ENCODE measurements at regions of chr11 and their contacts with region 1.

Region 1: GRCh38 chr11:117232092-117232878 is at the start of gene RNF214:
- DNase-seq: peak; percentile 74 to 90 (median 86)
- ATAC-seq: peak; percentile 89 to 92 (median 92)
- H3K4me3 ChIP-seq: peak within 1 kb of the TSS; percentile 81 to 94 (median 90)
- H3K27ac ChIP-seq: peak within 1 kb of the TSS; percentile 69 to 92 (median 86)
- H3K4me1 ChIP-seq: peaks cover 9 to 21% (median 13%) of the 10 kb centered on the region in 3 donors
- H3K27me3 ChIP-seq: no peaks in the 10 kb centered on the region
- CTCF ChIP-seq: peak; percentile 87 to 96 (median 89)
- total RNA-seq, gene RNF214: 14.0 to 23.8 (median 20.8) TPM

Region 2: DNA sequence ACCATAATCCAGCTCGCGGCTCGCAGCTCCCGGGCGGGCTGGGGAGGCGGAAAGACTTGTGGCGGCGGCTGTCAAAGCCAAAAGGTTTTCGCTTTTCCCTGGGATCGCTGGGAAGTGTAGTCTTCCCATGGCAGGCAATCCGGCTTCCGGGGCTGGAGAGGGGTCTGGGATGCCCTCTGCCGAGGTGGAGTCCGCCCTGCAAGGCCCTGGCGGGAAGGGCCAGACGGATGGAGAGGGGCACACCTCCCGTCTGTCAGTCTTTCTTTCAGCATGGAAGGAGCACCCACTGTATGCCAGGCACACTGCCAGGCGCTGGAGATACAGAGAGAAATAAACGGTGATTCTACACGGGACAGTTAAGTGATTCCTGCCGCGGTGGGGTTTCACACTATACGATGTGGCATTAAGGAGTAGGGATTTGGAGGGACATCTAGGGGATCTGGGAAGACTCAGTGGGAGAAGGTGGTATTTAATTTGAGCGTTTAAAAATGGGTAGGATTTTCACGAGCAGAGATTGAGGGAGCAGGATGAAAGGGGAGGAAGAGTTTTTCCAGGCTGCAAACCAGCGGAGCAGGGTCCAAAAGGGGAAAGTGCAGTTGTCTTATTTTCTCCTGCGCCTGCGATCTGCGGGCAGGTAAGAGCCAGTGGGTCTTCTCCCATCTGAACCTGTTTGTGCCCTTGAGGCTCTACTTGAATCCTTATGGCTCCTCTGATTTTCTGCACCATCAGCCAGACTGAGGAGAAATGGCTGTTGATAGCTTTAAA is 84.1 kb after region 1 on chr11 and contains the start of gene BACE1:
- intact Hi-C with region 1: loop called in 2 of 3 experiments (anchors 5 to 10 kb)
- DNase-seq: peak; percentile 87 to 95 (median 89)
- ATAC-seq: peak; percentile 78 to 90 (median 85)
- H3K4me3 ChIP-seq: peak within 1 kb of the TSS; percentile 78 to 94 (median 89)
- H3K27ac ChIP-seq: peak within 1 kb of the TSS; percentile 28 to 73 (median 58)
- H3K4me1 ChIP-seq: peaks cover 0 to 30% (median 17%) of the 10 kb centered on the region in 3 donors
- H3K27me3 ChIP-seq: no peaks in the 10 kb centered on the region
- CTCF ChIP-seq: peak in 1 of 4 donors; percentile 9
- total RNA-seq, gene BACE1: 72.5 to 207 (median 123) TPM

Region 3: DNA sequence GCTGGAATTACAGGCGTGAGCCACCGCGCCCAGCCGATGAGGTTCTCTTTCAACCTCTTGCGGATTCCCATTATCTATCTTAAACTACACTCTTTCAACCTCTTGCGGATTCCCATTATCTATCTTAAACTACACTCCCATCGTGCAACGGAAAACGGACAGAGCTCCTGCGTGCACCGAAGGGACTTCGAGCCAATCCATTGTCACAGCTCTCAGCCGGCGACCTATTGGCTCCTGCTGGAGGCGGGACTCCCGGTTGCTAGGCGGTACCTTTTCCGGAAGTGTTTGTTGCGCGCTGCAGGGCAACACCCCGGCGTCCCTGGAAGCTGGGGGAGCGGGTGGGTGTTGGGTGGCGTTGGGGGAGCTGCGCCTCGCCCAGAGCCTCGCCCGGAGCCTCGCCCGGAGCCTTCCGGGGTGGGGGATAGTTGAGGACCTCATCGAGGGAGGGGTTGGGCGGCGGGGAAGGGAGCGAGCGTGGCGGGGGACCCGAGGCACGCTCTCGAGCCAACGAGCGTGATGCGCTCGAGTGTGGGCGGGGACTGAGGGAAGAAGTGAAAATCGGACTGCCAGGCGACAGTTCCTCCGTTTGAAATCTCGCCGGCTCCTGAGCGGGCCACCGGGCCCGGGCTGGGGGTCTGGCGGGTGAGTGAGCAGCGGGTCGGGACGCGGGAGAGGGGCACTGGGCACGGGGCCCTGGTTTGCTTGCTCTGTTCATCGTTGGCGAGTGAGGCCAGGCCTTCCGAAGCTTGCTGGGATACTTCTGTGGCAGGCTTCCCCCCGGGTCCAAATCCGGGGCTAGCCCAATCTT is 95.5 kb after region 1 on chr11 and contains the start of gene CEP164:
- intact Hi-C with region 1: no loop called
- DNase-seq: peak; percentile 90 to 97 (median 95)
- ATAC-seq: peak; percentile 97 to 99 (median 98)
- H3K4me3 ChIP-seq: peak within 1 kb of the TSS; percentile 43 to 82 (median 62)
- H3K27ac ChIP-seq: peak within 1 kb of the TSS; percentile 80 to 85 (median 82)
- H3K4me1 ChIP-seq: peaks cover 0 to 8% (median 5%) of the 10 kb centered on the region in 3 donors
- H3K27me3 ChIP-seq: no peaks in the 10 kb centered on the region
- CTCF ChIP-seq: no peak
- total RNA-seq, gene CEP164: 12.9 to 27.4 (median 23.7) TPM

Measured in pancreas (tissue), 10 donors.